Activated B cell treated with CpG ODN at 0.5 μM for 24 hours (primary cell): ENCODE measurements at regions of chr1 and their contacts with region 1.

Region 1: GRCh38 chr1:179081687-179082332 is at the start of gene TOR3A:
- DNase-seq: peak; percentile 82
- ATAC-seq: peak; percentile 79
- H3K4me3 Mint-ChIP-seq: peak within 1 kb of the TSS; percentile 98
- H3K27ac Mint-ChIP-seq: peak within 1 kb of the TSS; percentile 96
- H3K4me1 Mint-ChIP-seq: peaks cover 44% of the 10 kb centered on the region
- H3K27me3 Mint-ChIP-seq: no peaks in the 10 kb centered on the region
- CTCF ChIP-seq: no peak
- total RNA-seq, gene TOR3A: 59.5 and 60.8 TPM in 2 replicates

Region 2: DNA sequence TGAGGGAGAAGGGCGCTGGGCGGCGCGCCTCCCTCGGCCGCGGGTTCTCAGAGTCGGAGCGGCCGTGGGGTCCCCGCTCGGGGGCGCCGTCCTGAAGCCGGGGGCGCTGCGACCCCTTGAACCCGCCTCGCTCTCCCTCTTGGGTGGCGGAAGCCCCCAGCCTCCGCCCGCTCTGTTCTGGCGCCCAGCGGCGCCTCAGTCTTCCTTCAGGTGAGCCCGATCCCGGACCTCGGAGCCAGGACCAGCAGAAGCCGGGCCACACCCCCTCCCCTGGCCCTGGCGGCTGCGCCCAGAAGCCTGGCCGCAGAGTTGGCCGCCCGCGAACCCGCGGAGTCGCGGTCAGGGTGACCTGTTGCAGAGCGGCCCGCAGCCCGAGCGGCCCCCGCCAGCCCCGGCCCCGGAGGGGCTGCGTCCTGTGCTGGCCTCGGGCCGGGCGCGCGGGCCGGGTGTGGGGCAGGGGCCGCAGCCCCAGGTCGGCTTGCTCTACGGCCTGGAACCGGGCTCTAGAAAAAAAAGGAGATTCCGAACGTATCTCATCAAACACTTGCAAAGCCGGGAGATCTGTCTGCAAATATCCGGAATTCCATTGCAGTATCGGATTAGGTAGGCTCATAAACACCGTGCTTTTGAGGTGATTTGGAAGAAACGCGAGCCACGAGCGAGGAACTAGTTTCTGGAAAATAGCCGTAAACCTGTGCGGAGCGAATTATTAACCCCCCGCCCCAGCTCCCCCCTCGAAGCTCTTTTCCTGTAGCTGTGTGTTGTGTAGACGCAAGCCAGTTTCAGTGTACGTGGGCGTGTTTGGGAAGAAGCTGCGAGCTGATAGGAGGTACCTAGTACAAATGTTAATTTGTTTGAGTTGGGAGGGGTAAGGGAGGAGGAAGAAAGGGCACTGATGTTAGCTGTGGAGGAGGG is 355.9 kb before region 1 on chr1:
- CTCF ChIA-PET with region 1: no interaction called
- POLR2A ChIA-PET with region 1: no interaction called
- intact Hi-C with region 1: loop called (anchors 5 kb)
- DNase-seq: peak; percentile 53
- ATAC-seq: peak; percentile 74
- H3K4me3 Mint-ChIP-seq: peak overlapping the region; percentile 92
- H3K27ac Mint-ChIP-seq: peak overlapping the region; percentile 96
- H3K4me1 Mint-ChIP-seq: peaks cover 55% of the 10 kb centered on the region
- H3K27me3 Mint-ChIP-seq: no peaks in the 10 kb centered on the region
- CTCF ChIP-seq: no peak

Region 3: GRCh38 chr1:179121159-179121938 is 39.5 kb after region 1 on chr1:
- CTCF ChIA-PET with region 1: interaction called, 4 read pairs
- POLR2A ChIA-PET with region 1: no interaction called
- intact Hi-C with region 1: loop called (anchors 1 kb)
- DNase-seq: no peak
- ATAC-seq: peak; percentile 47
- H3K4me3 Mint-ChIP-seq: no peak overlapping the region
- H3K27ac Mint-ChIP-seq: no peak overlapping the region
- H3K4me1 Mint-ChIP-seq: peaks cover 8% of the 10 kb centered on the region
- H3K27me3 Mint-ChIP-seq: no peaks in the 10 kb centered on the region
- CTCF ChIP-seq: peak; percentile 66

Region 4: GRCh38 chr1:179229214-179230140 is 147.7 kb after region 1 on chr1 and contains the start of gene ABL2:
- CTCF ChIA-PET with region 1: no interaction called
- POLR2A ChIA-PET with region 1: interaction called, 4 read pairs
- intact Hi-C with region 1: loop called (anchors 1 kb)
- DNase-seq: peak; percentile 49
- ATAC-seq: peak; percentile 72
- H3K4me3 Mint-ChIP-seq: peak within 1 kb of the TSS; percentile 95
- H3K27ac Mint-ChIP-seq: peak within 1 kb of the TSS; percentile 78
- H3K4me1 Mint-ChIP-seq: peaks cover 23% of the 10 kb centered on the region
- H3K27me3 Mint-ChIP-seq: no peaks in the 10 kb centered on the region
- CTCF ChIP-seq: no peak
- total RNA-seq, gene ABL2: 15.2 and 15.6 TPM in 2 replicates

Region 5: DNA sequence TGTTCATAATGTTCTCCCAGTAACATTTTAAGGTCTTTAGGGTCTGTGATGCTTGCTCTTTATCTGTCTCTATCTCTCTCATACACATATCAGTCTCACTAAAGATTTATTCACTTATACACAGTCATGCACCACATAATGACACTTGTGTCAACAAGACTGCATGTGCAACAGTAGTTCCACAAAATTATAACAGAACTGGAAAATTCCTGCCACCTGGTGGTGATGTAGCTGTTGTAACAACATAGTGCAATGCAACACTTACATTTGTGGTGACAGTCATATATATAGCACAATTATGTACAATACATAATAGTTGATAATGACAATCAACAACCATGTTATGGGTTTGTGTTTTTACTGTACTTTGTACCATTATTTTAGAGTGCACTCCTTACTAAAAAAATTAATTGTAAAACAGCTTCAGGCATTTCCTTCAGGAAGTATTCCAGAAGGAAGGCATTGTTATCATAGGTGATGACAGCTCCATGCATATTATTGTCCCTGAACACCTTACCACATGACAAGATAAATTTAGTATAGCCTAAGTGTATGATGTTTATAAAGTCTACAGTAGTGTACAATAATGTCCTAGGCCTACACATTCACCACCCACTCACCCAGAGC is 517.9 kb after region 1 on chr1:
- CTCF ChIA-PET with region 1: no interaction called
- POLR2A ChIA-PET with region 1: no interaction called
- intact Hi-C with region 1: loop called (anchors 2 kb)
- DNase-seq: no peak
- ATAC-seq: no peak
- H3K4me3 Mint-ChIP-seq: no peak overlapping the region
- H3K27ac Mint-ChIP-seq: no peak overlapping the region
- H3K4me1 Mint-ChIP-seq: no peaks in the 10 kb centered on the region
- H3K27me3 Mint-ChIP-seq: peaks cover 11% of the 10 kb centered on the region
- CTCF ChIP-seq: no peak